CD4-positive, alpha-beta memory T cell (primary cell): ENCODE measurements at regions of chr11 and their contacts with region 1.

Region 1: DNA sequence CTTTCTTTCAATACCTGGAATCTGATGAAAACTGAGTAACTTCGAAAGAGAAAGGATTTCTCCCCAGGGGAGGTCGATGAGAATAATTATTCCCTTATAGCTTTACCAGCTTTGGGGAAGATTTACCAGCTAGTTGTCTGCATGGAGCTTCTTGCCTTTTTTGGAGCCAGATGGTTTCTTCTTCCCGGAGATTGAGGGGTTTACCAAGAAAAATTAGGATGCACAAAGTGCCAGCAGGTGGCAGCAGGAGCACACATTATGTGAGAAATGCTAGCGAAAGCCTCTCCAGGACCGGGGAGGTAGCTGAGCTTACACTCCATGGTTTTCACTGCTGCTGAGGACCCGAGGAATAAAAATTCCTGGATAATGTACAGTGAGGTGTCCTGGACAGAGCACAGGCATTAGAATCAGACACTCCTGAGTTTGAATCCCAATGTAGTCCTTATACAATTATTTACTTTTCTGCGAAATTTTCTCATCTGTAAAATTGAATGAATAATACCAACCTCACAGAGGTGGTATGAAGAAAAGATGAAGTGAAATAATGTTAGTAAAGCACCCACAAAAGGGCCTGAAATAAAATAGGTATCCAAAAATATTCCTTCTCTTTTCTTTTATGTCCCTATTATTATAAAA is 46.0 kb upstream of the PARVA start:
- DNase-seq: peak; percentile 68 to 71 (median 68)
- H3K4me3 ChIP-seq: no peak overlapping the region
- H3K4me3 Mint-ChIP-seq: no peak overlapping the region
- H3K27ac ChIP-seq: no peak overlapping the region
- H3K27ac Mint-ChIP-seq: peak overlapping the region in 1 of 7 donors; percentile 25
- H3K4me1 ChIP-seq: no peaks in the 10 kb centered on the region
- H3K4me1 Mint-ChIP-seq: peaks cover 0 to 5% (median 3%) of the 10 kb centered on the region in 4 donors
- H3K27me3 ChIP-seq: no peaks in the 10 kb centered on the region
- H3K27me3 Mint-ChIP-seq: no peaks in the 10 kb centered on the region

Region 2: DNA sequence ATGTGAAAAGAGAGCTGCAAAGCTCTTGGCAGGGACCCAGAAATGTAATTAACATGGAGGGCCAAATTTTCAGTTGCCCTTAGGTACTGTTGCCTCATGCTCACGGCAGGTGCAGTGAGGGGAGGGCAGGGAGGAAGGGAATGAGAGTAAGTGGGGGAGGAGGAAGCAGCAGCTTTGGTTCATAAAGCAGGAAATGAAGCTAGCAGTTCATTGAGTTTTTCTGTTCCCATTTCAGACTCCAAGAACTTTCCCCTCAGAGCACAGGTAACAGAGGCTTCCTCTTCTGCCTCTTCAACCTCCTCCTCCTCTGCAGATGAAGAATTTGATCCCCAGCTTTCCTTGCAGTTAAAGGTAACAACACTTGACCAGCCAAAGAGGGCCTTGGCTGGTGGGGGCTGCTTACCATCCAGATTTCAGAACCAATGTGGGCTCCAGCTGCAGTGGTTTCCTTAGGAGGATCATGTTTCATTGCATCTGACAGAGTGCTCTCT is 11.9 kb before region 1 on chr11:
- CTCF ChIA-PET with region 1: interaction called, 21 read pairs
- POLR2A ChIA-PET with region 1: no interaction called
- intact Hi-C with region 1: no loop called
- DNase-seq: no peak
- H3K4me3 ChIP-seq: no peak overlapping the region
- H3K4me3 Mint-ChIP-seq: no peak overlapping the region
- H3K27ac ChIP-seq: no peak overlapping the region
- H3K27ac Mint-ChIP-seq: no peak overlapping the region
- H3K4me1 ChIP-seq: peaks cover 7% of the 10 kb centered on the region
- H3K4me1 Mint-ChIP-seq: peaks cover 6 to 18% (median 9%) of the 10 kb centered on the region in 4 donors
- H3K27me3 ChIP-seq: no peaks in the 10 kb centered on the region
- H3K27me3 Mint-ChIP-seq: no peaks in the 10 kb centered on the region

Region 3: GRCh38 chr11:12377824-12378593 is 46.7 kb after region 1 on chr11:
- CTCF ChIA-PET with region 1: interaction called, 38 read pairs
- POLR2A ChIA-PET with region 1: interaction called, 14 read pairs
- intact Hi-C with region 1: loop called (anchors 1 kb)
- DNase-seq: peak in 4 of 5 donors; percentile 22 to 50 (median 32)
- H3K4me3 ChIP-seq: peak overlapping the region in 1 of 2 donors; percentile 49
- H3K4me3 Mint-ChIP-seq: peak overlapping the region; percentile 83 to 91 (median 87)
- H3K27ac ChIP-seq: no peak overlapping the region
- H3K27ac Mint-ChIP-seq: peak overlapping the region in 6 of 7 donors; percentile 38 to 84 (median 76)
- H3K4me1 ChIP-seq: peaks cover 5% of the 10 kb centered on the region
- H3K4me1 Mint-ChIP-seq: peaks cover 14 to 26% (median 19%) of the 10 kb centered on the region in 4 donors
- H3K27me3 ChIP-seq: no peaks in the 10 kb centered on the region
- H3K27me3 Mint-ChIP-seq: peaks cover 2 to 14% of the 10 kb centered on the region in 2 donors

Region 4: GRCh38 chr11:12496171-12497025 is 165.0 kb after region 1 on chr11:
- CTCF ChIA-PET with region 1: interaction called, 11 read pairs
- POLR2A ChIA-PET with region 1: no interaction called
- intact Hi-C with region 1: loop called (anchors 5 kb)
- DNase-seq: no peak
- H3K4me3 ChIP-seq: no peak overlapping the region
- H3K4me3 Mint-ChIP-seq: no peak overlapping the region
- H3K27ac ChIP-seq: no peak overlapping the region
- H3K27ac Mint-ChIP-seq: peak overlapping the region in 1 of 7 donors; percentile 5
- H3K4me1 ChIP-seq: no peaks in the 10 kb centered on the region
- H3K4me1 Mint-ChIP-seq: no peaks in the 10 kb centered on the region
- H3K27me3 ChIP-seq: no peaks in the 10 kb centered on the region
- H3K27me3 Mint-ChIP-seq: no peaks in the 10 kb centered on the region

Region 5: GRCh38 chr11:12893787-12894672 is 562.7 kb after region 1 on chr11:
- CTCF ChIA-PET with region 1: interaction called, 239 read pairs
- POLR2A ChIA-PET with region 1: interaction called, 9 read pairs
- intact Hi-C with region 1: loop called (anchors 1 kb)
- DNase-seq: peak; percentile 29 to 46 (median 34)
- H3K4me3 ChIP-seq: no peak overlapping the region
- H3K4me3 Mint-ChIP-seq: no peak overlapping the region
- H3K27ac ChIP-seq: no peak overlapping the region
- H3K27ac Mint-ChIP-seq: no peak overlapping the region
- H3K4me1 ChIP-seq: no peaks in the 10 kb centered on the region
- H3K4me1 Mint-ChIP-seq: no peaks in the 10 kb centered on the region
- H3K27me3 ChIP-seq: no peaks in the 10 kb centered on the region
- H3K27me3 Mint-ChIP-seq: peaks cover 3 to 14% of the 10 kb centered on the region in 2 donors

Region 6: GRCh38 chr11:13238879-13239514 is 907.6 kb after region 1 on chr11:
- CTCF ChIA-PET with region 1: interaction called, 3 read pairs
- POLR2A ChIA-PET with region 1: no interaction called
- intact Hi-C with region 1: loop called (anchors 5 kb)
- DNase-seq: peak; percentile 45 to 61 (median 54)
- H3K4me3 ChIP-seq: no peak overlapping the region
- H3K4me3 Mint-ChIP-seq: no peak overlapping the region
- H3K27ac ChIP-seq: no peak overlapping the region
- H3K27ac Mint-ChIP-seq: peak overlapping the region in 1 of 7 donors; percentile 63
- H3K4me1 ChIP-seq: no peaks in the 10 kb centered on the region
- H3K4me1 Mint-ChIP-seq: peaks cover 0 to 3% (median 1%) of the 10 kb centered on the region in 4 donors
- H3K27me3 ChIP-seq: peaks cover 8% of the 10 kb centered on the region
- H3K27me3 Mint-ChIP-seq: peaks cover 7 to 15% of the 10 kb centered on the region in 2 donors